Endothelial cell of umbilical vein (primary cell): ENCODE measurements at regions of chr11 and their contacts with region 1.

Region 1: GRCh38 chr11:128776424-128777284 is 82.8 kb downstream of the FLI1 start:
- DNase-seq: no peak
- H3K4me3 ChIP-seq: no peak overlapping the region
- H3K27ac ChIP-seq: no peak overlapping the region
- H3K4me1 ChIP-seq: peaks cover 27% of the 10 kb centered on the region
- H3K27me3 ChIP-seq: no peaks in the 10 kb centered on the region
- CTCF ChIP-seq: peak; percentile 29 to 39
- POLR2A ChIP-seq: no peak

Region 2: GRCh38 chr11:128757235-128757711 is 19.4 kb before region 1 on chr11:
- CTCF ChIA-PET with region 1: interaction called, 10 read pairs
- POLR2A ChIA-PET with region 1: no interaction called
- dilution Hi-C with region 1: no loop called
- intact Hi-C with region 1: no loop called
- DNase-seq: peak; percentile 75
- H3K4me3 ChIP-seq: no peak overlapping the region
- H3K27ac ChIP-seq: peak overlapping the region; percentile 21
- H3K4me1 ChIP-seq: peaks cover 19% of the 10 kb centered on the region
- H3K27me3 ChIP-seq: no peaks in the 10 kb centered on the region
- CTCF ChIP-seq: peak; percentile 55 to 61
- POLR2A ChIP-seq: no peak

Region 3: DNA sequence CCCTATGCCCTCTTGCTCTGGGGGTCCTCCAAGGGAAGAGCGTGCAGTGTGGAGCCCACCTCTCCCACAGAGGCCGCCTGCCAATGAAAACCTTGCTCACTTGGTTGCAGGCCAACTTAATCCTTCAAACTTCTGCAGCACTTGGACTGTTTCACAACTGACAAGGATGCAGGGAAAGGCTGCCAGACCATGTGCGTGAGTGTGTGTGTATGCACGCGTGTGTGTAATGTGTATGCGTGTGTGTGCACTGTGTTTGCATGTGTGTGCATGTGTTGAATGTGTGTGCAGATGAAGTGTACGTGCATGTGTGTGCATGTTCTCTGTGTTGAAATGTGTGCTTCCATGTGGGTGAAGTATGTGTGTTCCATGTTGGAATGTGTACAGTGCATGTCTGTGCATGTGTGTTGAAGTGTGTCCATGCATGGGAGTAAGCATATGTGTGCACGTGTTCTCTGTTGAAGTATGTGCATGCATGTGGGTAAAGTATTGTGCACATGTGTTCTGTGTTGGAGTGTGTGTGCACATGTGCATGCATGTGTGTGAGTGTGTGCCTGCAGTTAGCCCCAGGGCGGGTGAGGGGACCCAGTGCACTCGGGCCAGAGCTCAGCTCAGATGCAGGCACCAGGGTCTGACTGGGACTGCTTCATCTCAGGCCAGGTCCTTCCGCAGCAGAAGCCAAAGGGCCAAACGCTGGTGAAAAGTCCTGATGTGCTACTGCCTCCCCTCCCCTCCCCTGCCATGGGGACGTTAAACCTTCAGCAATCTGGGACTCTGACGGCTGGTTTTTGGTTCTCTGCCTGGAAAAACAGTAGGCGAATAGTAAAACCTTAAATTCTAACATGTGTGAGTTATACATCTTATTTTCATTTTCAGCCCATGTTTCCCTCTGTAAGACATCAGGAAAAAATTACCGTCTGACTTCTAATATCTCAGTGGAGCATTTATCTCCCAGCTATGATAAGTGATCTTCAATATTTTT is 10.8 kb before region 1 on chr11:
- CTCF ChIA-PET with region 1: interaction called, 13 read pairs
- POLR2A ChIA-PET with region 1: no interaction called
- dilution Hi-C with region 1: no loop called
- intact Hi-C with region 1: no loop called
- DNase-seq: no peak
- H3K4me3 ChIP-seq: no peak overlapping the region
- H3K27ac ChIP-seq: no peak overlapping the region
- H3K4me1 ChIP-seq: no peaks in the 10 kb centered on the region
- H3K27me3 ChIP-seq: no peaks in the 10 kb centered on the region
- CTCF ChIP-seq: no peak
- POLR2A ChIP-seq: no peak

Region 4: DNA sequence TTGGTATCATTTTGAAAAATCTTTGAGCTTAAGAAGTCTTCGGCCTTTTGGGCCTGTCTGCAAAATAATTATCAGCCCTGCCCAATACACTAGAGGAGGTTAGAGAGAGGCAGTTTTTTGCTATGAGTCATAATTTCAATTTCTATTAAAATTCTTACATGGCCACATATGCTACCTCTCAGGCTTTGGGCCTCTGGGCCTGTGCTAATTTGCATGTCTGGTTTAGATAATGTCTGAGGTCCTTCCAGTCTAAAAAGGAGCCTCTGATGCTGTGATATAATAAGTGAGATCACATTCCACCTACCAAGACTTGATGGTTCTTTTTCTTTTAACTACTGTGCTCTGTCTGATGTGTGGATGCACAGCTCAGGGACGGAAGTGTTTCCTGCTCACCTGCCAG is 19.6 kb after region 1 on chr11:
- CTCF ChIA-PET with region 1: no interaction called
- POLR2A ChIA-PET with region 1: no interaction called
- dilution Hi-C with region 1: no loop called
- intact Hi-C with region 1: no loop called
- DNase-seq: no peak
- H3K4me3 ChIP-seq: no peak overlapping the region
- H3K27ac ChIP-seq: no peak overlapping the region
- H3K4me1 ChIP-seq: no peaks in the 10 kb centered on the region
- H3K27me3 ChIP-seq: no peaks in the 10 kb centered on the region
- CTCF ChIP-seq: no peak
- POLR2A ChIP-seq: no peak

Region 5: DNA sequence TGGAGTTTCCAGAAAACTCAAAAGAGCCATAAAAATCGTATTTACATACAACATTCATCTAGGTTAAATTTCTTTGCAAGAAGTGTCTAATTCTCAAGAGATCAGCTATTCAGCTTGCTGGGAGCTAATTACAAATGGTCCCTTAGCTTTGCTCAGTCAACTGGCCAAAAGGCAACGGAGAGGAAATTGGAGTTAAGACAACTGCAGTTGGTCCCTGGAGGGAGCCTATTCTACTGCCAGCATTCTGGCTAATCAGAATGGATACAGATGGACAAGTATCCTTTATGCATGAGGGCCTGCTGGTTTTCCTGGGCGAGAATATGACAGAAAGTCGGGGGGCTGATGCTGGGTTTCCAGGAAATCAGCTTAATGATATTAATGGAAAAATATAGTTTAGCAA is 44.9 kb after region 1 on chr11:
- CTCF ChIA-PET with region 1: no interaction called
- POLR2A ChIA-PET with region 1: no interaction called
- dilution Hi-C with region 1: no loop called
- intact Hi-C with region 1: no loop called
- DNase-seq: no peak
- H3K4me3 ChIP-seq: no peak overlapping the region
- H3K27ac ChIP-seq: no peak overlapping the region
- H3K4me1 ChIP-seq: peaks cover 13% of the 10 kb centered on the region
- H3K27me3 ChIP-seq: no peaks in the 10 kb centered on the region
- CTCF ChIP-seq: no peak
- POLR2A ChIP-seq: no peak

Region 6: DNA sequence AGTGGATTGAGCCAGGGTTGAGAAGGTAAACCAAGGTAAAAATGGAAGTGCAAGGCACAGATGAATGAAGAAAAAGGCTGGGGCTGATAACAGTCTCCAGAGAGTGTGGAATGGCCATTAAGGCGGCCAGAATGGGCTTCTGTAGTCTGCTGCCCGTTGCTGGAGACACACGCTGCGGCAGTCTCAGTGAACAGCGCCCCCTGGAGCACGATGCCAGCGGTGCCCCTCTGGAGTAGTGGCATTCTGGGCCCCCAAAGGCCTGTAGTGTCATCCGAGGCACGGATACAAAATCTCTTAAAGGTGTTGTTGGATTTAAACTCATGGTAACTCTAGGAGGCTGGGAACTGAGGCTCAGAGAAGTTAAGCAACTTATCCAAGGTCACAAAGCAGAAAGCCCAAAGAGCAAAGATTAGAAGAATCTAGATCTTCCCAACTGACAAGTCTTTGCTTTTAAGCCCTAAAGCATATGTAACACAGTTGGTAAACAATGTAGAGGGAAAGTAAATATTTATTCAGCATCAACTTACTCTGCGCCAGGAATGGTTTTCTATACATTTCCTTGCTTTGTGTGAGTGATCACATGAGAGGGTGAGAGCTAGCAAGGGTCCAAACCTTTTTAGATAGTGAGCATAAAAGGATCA is 72.3 kb after region 1 on chr11:
- CTCF ChIA-PET with region 1: interaction called, 5 read pairs
- POLR2A ChIA-PET with region 1: no interaction called
- dilution Hi-C with region 1: no loop called
- intact Hi-C with region 1: loop called (anchors 2 kb)
- DNase-seq: peak; percentile 72
- H3K4me3 ChIP-seq: no peak overlapping the region
- H3K27ac ChIP-seq: no peak overlapping the region
- H3K4me1 ChIP-seq: peaks cover 4% of the 10 kb centered on the region
- H3K27me3 ChIP-seq: no peaks in the 10 kb centered on the region
- CTCF ChIP-seq: peak; percentile 94 to 97
- POLR2A ChIP-seq: no peak